Sciatic nerve (tissue), 2 donors: ENCODE measurements at regions of chr19 and their contacts with region 1.

Region 1: GRCh38 chr19:38402967-38403861 is at the start of gene FAM98C:
- DNase-seq: peak; percentile 97
- ATAC-seq: peak; percentile 99
- total RNA-seq, gene FAM98C: 24.8 TPM

Region 2: DNA sequence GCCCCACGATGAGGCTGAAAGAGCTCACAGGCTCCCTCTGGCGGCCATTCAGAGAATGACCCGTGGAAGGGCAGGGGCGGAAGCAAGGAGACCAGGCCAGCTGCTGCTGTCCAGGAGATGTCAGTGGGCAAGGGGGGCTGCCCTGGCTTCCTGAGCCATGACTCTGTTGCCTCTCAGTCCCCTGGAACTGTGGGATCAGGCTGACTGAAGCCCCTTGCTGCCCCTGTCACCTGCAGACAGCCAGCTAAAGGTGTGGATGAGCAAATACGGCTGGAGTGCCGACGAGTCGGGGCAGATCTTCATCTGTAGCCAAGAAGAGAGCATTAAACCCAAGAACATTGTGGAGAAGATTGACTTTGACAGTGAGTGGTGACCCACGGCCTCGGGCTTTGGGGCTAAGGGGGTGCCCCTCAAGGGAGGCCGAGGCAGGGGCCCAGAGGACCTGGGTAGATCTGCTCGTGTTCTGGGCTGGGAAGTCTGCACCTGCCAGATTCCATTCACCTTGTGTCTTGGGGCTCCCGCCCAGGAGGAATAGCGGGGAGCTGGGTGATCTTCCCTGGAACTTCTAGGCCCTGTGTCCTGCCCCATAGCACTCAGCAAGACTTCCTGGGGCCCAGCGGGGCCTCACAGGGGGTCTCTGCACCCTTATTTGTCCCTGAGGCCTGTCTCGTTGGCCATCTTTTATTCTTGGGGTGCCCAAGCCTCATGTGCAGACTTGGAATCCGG is 231.7 kb after region 1 on chr19:
- intact Hi-C with region 1: loop called (anchors 10 kb)
- DNase-seq: peak; percentile 90
- ATAC-seq: peak; percentile 75